GM12878 (cell line): ENCODE measurements at regions of chr17 and their contacts with region 1.

Region 1: DNA sequence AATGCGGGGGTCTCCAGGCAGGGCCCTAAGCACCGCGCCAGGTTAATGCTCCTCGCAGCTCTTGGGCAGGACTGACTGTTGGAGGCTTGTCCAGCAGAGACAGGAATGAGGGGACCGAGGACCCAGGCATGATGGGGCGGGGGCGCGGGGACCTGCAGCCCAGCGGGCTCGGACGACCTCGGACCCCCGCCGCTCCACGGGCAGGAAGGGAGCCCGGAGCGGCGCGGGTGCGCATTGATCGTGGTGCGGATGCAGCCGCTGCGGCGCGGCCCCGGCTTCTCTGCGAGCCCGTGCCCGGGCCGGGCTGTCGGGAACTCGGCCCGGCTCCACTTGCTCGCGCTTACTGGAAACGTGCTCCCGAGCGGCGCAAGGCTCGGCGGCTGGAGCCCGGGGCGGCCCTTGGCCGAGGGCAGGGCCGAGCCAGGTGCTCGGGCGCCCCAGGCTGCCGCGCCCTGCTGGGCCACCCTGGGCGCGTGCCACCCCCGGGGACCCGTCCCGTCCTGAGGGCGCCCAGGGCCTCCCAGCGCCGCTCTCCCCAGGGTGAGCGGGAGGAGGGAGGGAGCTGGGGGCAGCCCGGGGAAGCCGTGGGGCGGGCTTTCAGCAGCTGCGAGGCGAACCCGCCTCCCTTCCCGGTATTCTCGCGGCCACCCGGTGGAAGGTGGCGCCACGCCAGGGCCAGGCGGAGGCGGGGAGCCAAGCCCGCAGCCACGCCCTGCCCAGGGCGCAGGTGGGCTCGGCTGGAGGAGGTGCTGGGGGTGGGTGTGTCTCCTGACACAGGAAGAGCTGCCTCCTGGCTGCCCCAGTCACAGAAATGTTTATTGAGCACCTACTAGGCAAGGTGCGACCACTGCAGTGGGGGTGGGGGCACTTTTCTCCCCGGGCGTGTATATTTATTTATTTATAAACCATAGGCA is 45.9 kb downstream of the SOCS3 start:
- DNase-seq: peak; percentile 45
- ATAC-seq: peak; percentile 69
- H3K4me3 ChIP-seq: peak overlapping the region; percentile 41; the same call in 1 of the 2 replicates
- H3K27ac ChIP-seq: no peak overlapping the region
- H3K4me1 ChIP-seq: peaks cover 42% of the 10 kb centered on the region
- H3K27me3 ChIP-seq: no peaks in the 10 kb centered on the region; a peak in 1 of 4 replicates
- CTCF ChIP-seq: no peak; a peak in 1 of 6 replicates
- EP300 ChIP-seq: no peak
- POLR2A ChIP-seq: no peak
- RAD21 ChIP-seq: no peak

Region 2: DNA sequence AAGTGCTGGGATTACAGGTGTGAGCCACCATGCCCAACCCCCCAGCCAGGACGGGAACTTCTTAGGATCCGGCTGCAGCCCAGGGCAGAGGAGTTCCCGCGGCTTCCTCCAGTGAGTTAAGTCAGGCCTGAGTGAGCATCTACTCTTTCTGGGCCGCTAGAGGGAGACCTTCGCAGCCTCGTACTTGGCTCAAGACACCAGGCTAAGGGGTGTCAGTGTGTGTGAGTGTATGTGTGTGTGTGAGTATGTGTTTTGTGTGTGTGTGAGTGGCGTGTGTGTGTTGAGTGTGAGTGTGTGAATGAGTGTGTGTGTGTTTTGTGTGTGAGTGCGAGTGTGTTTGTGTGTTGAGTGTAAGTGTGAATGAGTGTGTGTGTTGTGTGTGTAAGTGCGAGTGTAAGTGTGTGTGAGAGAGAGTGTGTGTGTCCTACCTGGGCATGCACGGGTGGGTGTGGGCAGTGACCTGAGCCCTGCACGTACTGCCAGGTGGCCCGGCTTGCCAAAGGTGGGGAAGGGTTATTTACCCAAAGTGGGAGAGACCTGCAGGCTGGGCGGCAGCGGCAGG is 24.1 kb before region 1 on chr17:
- CTCF ChIA-PET with region 1: interaction called, 6 read pairs
- POLR2A ChIA-PET with region 1: no interaction called
- RAD21 ChIA-PET with region 1: interaction called, 7 read pairs
- SMC1A ChIA-PET with region 1: interaction called, 6 read pairs
- in situ Hi-C with region 1: no loop called
- intact Hi-C with region 1: loop called (anchors 2 kb)
- DNase-seq: peak; percentile 30
- ATAC-seq: peak; percentile 100
- H3K4me3 ChIP-seq: no peak overlapping the region
- H3K27ac ChIP-seq: no peak overlapping the region
- H3K4me1 ChIP-seq: peaks cover 8% of the 10 kb centered on the region
- H3K27me3 ChIP-seq: no peaks in the 10 kb centered on the region
- CTCF ChIP-seq: peak; percentile 88 to 92 (median 89)
- EP300 ChIP-seq: no peak
- POLR2A ChIP-seq: no peak
- RAD21 ChIP-seq: peak; percentile 91

Region 3: DNA sequence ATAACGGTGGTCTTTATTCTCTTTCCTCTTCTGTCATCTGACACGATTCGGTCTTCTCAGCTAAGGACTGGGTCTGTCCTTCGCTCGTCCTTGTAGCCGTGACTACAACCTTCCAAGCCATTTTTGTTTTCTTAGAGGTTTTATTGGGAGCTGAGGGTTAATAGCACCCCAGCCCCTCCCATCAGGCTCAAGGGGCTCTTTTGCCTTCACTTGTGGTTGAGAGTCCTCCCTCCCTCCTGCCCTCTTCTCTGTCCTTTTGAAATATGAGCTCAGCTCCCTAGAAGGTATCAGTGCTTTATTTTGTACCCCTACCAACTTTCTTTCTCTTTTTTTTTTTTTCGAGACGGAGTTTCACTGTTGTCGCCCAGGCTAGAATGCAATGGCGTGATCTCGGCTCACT is 21.2 kb after region 1 on chr17:
- CTCF ChIA-PET with region 1: interaction called, 30 read pairs
- POLR2A ChIA-PET with region 1: interaction called, 17 read pairs
- RAD21 ChIA-PET with region 1: interaction called, 81 read pairs
- SMC1A ChIA-PET with region 1: interaction called, 91 read pairs
- in situ Hi-C with region 1: no loop called
- intact Hi-C with region 1: no loop called
- DNase-seq: no peak
- ATAC-seq: no peak
- H3K4me3 ChIP-seq: no peak overlapping the region
- H3K27ac ChIP-seq: no peak overlapping the region
- H3K4me1 ChIP-seq: peaks cover 38% of the 10 kb centered on the region
- H3K27me3 ChIP-seq: no peaks in the 10 kb centered on the region
- CTCF ChIP-seq: no peak
- EP300 ChIP-seq: no peak
- POLR2A ChIP-seq: no peak
- RAD21 ChIP-seq: no peak

Region 4: GRCh38 chr17:78341559-78342448 is 27.8 kb after region 1 on chr17:
- CTCF ChIA-PET with region 1: interaction called, 30 read pairs
- POLR2A ChIA-PET with region 1: interaction called, 14 read pairs
- RAD21 ChIA-PET with region 1: interaction called, 81 read pairs
- SMC1A ChIA-PET with region 1: interaction called, 91 read pairs
- in situ Hi-C with region 1: no loop called
- intact Hi-C with region 1: no loop called
- DNase-seq: no peak
- ATAC-seq: peak; percentile 2
- H3K4me3 ChIP-seq: no peak overlapping the region; the same call in 1 of the 2 replicates
- H3K27ac ChIP-seq: no peak overlapping the region
- H3K4me1 ChIP-seq: peaks cover 60% of the 10 kb centered on the region
- H3K27me3 ChIP-seq: no peaks in the 10 kb centered on the region
- CTCF ChIP-seq: no peak
- EP300 ChIP-seq: no peak
- POLR2A ChIP-seq: no peak
- RAD21 ChIP-seq: no peak